PC-9 (cell line): ENCODE measurements at regions of chr9 and their contacts with region 1.

Region 1: GRCh38 chr9:99931157-99931840 is 24.8 kb downstream of the STX17 start:
- DNase-seq: no peak
- H3K4me3 ChIP-seq: no peak overlapping the region
- H3K27ac ChIP-seq: no peak overlapping the region
- H3K4me1 ChIP-seq: no peaks in the 10 kb centered on the region
- H3K27me3 ChIP-seq: no peaks in the 10 kb centered on the region
- CTCF ChIP-seq: no peak

Region 2: DNA sequence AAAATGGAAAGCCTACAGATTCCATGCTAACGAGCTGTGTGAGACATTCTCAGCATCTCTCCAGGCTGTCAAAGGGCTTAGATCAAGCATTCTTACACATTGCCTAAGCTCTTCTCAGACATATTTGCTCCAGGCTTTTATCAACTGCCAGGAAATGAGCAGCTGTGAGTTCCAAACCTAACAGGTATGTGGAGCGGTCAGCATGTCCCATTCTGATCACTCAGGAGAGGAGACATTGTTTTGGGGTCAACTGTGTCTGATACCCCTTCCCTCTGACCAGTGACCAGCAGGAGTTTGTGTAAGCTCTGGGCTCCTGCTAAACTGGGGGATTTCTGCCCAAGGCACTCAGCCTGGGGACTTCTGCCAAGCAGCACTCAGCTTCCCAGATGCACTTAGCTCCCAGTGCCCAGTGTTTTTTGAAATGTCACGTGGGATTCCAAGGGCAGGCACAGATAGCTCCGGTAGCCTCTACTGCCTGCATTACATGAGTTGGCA is 480.1 kb before region 1 on chr9:
- CTCF ChIA-PET with region 1: interaction called, 10 read pairs
- POLR2A ChIA-PET with region 1: no interaction called
- intact Hi-C with region 1: no loop called
- DNase-seq: no peak
- H3K4me3 ChIP-seq: no peak overlapping the region
- H3K27ac ChIP-seq: no peak overlapping the region
- H3K4me1 ChIP-seq: 0 out of 2 replicates have a peak, but pooled peaks cover under 1% of the 10 kb centered on the region
- H3K27me3 ChIP-seq: no peaks in the 10 kb centered on the region
- CTCF ChIP-seq: no peak

Region 3: DNA sequence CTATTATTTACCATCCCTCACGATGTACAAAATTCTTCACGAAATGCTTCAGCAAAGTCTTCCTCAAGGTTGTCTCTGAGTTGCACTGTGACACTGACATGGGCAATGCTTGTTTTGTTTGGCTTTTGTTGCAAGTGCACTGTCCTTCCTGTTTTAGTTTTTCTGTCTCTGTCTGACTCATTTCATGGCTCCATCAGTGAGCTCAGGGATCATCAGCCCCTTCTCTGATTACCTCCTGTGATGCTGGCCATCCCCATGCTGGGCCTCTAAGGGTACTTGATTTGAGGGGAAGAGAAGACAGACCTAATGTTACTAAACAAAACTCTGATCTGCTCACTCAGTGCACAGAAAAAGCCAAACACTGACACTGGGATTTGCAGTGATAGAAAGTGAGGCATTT is 62.5 kb before region 1 on chr9:
- CTCF ChIA-PET with region 1: no interaction called
- POLR2A ChIA-PET with region 1: no interaction called
- intact Hi-C with region 1: no loop called
- DNase-seq: no peak
- H3K4me3 ChIP-seq: no peak overlapping the region
- H3K27ac ChIP-seq: no peak overlapping the region
- H3K4me1 ChIP-seq: peaks cover 19% of the 10 kb centered on the region
- H3K27me3 ChIP-seq: no peaks in the 10 kb centered on the region
- CTCF ChIP-seq: no peak

Region 4: DNA sequence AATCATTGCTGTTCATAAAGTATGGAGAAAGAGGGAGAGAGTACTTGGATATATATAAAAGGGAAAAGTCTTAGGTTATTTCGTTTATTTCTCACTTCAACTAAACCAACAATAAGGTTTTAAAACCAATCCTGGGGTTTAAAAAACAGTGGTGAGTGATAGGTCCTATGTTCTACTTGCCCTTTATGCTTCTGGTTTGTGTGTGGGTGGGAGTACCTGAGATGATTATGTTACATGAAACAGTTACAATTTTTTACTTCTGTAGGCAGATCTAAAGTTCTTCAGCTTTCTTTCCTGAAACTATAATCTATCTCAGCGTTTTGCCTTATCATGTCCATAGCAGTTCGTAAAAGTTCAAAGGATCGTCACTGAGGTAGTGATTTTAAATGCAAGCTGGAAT is 24.3 kb after region 1 on chr9:
- CTCF ChIA-PET with region 1: no interaction called
- POLR2A ChIA-PET with region 1: interaction called, 20 read pairs
- intact Hi-C with region 1: no loop called
- DNase-seq: no peak
- H3K4me3 ChIP-seq: no peak overlapping the region
- H3K27ac ChIP-seq: no peak overlapping the region
- H3K4me1 ChIP-seq: no peaks in the 10 kb centered on the region
- H3K27me3 ChIP-seq: no peaks in the 10 kb centered on the region
- CTCF ChIP-seq: no peak